ENCODE measurements at regions of chr7 and their contacts with region 1.

Region 1: DNA sequence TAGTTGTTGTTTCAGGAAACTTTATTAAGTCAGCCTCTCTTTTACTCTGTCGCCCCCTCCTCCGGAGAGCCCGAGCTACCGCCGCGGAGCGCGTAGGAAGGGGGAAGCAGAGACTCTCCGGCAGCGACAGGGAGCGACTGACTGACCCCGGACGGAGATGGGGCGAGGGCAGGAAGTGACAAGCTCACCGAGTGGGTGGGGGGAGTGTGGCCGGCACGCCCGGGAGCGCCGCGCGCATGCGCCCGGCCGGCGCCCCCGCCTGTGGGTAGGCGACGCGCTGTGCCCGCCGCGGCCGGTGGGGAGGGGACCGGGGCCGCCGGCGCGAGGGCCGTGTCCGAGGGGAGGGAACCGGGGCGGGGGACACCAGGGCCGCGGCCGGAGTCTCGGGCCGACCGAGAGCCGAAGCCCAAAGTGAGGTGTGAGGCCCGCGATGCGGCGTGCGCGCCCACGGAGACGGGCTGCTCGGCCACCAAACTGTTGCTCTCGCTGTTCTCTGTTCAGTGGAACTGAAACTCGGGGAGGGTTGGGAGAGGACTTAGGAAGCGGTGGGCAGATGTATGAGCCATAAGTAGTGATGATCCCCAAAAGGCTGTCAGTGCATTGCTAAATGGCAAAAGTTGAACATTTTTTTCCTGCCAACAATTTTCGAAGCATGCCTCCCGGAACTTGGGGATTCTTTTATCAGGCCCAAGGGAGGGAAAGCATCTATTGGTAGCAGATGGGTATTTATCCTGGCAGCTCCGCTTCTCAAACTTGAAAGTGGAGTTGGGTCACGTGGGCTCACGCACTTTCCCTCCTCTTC is at the start of gene ZNF800:
- DNase-seq: peak; percentile 93
- ATAC-seq: peak; percentile 85
- H3K4me3 Mint-ChIP-seq: peak within 1 kb of the TSS; percentile 95
- H3K27ac Mint-ChIP-seq: peak within 1 kb of the TSS; percentile 96
- H3K4me1 Mint-ChIP-seq: peaks cover 54% of the 10 kb centered on the region
- H3K27me3 Mint-ChIP-seq: no peaks in the 10 kb centered on the region
- CTCF ChIP-seq: no peak
- total RNA-seq, gene ZNF800: 29.3 to 31.1 TPM

Region 2: DNA sequence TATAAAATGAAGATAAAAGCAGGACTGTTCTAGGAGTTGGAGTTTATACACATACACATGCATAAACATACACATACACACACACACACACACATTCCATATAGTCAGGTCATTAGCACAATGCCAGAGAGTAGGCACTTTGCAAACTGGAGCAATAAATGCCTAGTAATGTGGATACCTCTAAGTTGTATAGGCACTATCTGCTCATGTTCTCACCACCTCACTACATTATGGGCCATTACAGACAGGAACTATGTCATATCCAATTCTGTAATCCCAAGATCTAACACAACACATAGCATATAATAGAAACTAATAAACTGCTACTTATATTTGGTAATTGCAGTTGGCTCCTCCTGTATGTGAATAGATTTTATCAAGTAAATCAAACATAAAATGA is 255.6 kb before region 1 on chr7:
- CTCF ChIA-PET with region 1: no interaction called
- POLR2A ChIA-PET with region 1: no interaction called
- intact Hi-C with region 1: no loop called
- DNase-seq: no peak
- ATAC-seq: no peak
- H3K4me3 Mint-ChIP-seq: no peak overlapping the region
- H3K27ac Mint-ChIP-seq: no peak overlapping the region
- H3K4me1 Mint-ChIP-seq: no peaks in the 10 kb centered on the region
- H3K27me3 Mint-ChIP-seq: peaks cover 2% of the 10 kb centered on the region
- CTCF ChIP-seq: no peak

Region 3: GRCh38 chr7:127377425-127377824 is 15.3 kb before region 1 on chr7:
- CTCF ChIA-PET with region 1: interaction called, 10 read pairs
- POLR2A ChIA-PET with region 1: interaction called, 21 read pairs
- intact Hi-C with region 1: no loop called
- DNase-seq: no peak
- ATAC-seq: no peak
- H3K4me3 Mint-ChIP-seq: no peak overlapping the region
- H3K27ac Mint-ChIP-seq: no peak overlapping the region
- H3K4me1 Mint-ChIP-seq: peaks cover 71% of the 10 kb centered on the region
- H3K27me3 Mint-ChIP-seq: no peaks in the 10 kb centered on the region
- CTCF ChIP-seq: no peak

Region 4: GRCh38 chr7:127404286-127405072 is 11.7 kb after region 1 on chr7:
- CTCF ChIA-PET with region 1: interaction called, 9 read pairs
- POLR2A ChIA-PET with region 1: interaction called, 23 read pairs
- intact Hi-C with region 1: no loop called
- DNase-seq: no peak
- ATAC-seq: peak; percentile 80
- H3K4me3 Mint-ChIP-seq: peak overlapping the region; percentile 49
- H3K27ac Mint-ChIP-seq: peak overlapping the region; percentile 60
- H3K4me1 Mint-ChIP-seq: peaks cover 24% of the 10 kb centered on the region
- H3K27me3 Mint-ChIP-seq: no peaks in the 10 kb centered on the region
- CTCF ChIP-seq: no peak

Region 5: GRCh38 chr7:127413962-127414361 is 21.2 kb after region 1 on chr7:
- CTCF ChIA-PET with region 1: interaction called, 4 read pairs
- POLR2A ChIA-PET with region 1: interaction called, 6 read pairs
- intact Hi-C with region 1: loop called (anchors 2 kb)
- DNase-seq: peak; percentile 14
- ATAC-seq: peak; percentile 73
- H3K4me3 Mint-ChIP-seq: no peak overlapping the region
- H3K27ac Mint-ChIP-seq: peak overlapping the region; percentile 39
- H3K4me1 Mint-ChIP-seq: peaks cover 51% of the 10 kb centered on the region
- H3K27me3 Mint-ChIP-seq: no peaks in the 10 kb centered on the region
- CTCF ChIP-seq: no peak